H1 (cell line): ENCODE measurements at regions of chr17 and their contacts with region 1.

Region 1: DNA sequence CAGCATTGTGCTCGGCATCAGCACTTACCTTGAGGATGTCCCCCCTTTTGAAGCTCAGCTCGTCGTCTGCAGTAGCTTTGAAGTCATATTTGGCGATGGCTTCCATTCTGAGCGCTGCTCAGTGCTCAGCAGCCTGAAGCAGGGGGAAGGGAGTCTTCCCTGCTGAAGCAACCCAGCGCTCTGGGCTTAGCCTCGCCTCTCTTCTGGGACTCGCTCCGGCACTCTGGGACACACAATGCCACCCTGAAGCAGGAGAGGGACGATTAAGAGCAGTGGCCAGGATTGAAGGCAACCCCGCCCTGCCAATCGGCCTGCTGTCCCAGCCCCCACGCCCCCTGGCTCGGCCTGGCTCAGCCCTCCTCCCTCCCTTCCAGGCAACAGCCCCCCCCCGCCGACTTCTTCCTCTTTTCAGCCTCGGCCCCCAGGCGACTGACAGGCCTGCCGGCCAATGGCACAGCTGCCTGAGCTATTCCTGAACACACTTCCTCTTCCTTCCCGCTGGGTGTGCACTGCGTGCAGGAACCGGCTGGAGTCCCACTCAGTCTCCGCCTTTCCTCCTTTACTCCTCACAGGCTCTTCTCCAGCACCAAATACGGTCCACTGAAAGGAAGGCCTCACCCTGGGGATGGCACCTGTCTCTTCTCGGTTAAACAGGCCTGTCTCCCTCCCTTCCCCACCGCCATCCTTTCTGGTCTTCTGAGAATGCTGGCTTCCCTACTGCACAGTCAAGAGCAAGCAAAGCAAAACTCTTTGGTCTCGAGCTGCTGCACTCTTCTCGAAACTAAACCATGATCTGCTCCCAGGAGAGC is 11.8 kb downstream of the GRB2 start:
- DNase-seq: peak; percentile 95 to 98
- H3K4me3 ChIP-seq: peak overlapping the region; percentile 74 to 93 (median 82)
- H3K27ac ChIP-seq: peak overlapping the region; percentile 72
- H3K4me1 ChIP-seq: peaks cover 0 to 4% (median 0%) of the 10 kb centered on the region in 4 experiments; a peak in 1 of 7 replicates
- H3K27me3 ChIP-seq: no peaks in the 10 kb centered on the region
- CTCF ChIP-seq: no peak
- EP300 ChIP-seq: 0 out of 3 replicates have a peak, but pooled peaks of 1 of the 2 experiments have one; percentile 17
- POLR2A ChIP-seq: peak; percentile 61 to 87
- RAD21 ChIP-seq: peak in 1 of 2 experiments; percentile 6; a peak in 1 of 4 replicates

Region 2: DNA sequence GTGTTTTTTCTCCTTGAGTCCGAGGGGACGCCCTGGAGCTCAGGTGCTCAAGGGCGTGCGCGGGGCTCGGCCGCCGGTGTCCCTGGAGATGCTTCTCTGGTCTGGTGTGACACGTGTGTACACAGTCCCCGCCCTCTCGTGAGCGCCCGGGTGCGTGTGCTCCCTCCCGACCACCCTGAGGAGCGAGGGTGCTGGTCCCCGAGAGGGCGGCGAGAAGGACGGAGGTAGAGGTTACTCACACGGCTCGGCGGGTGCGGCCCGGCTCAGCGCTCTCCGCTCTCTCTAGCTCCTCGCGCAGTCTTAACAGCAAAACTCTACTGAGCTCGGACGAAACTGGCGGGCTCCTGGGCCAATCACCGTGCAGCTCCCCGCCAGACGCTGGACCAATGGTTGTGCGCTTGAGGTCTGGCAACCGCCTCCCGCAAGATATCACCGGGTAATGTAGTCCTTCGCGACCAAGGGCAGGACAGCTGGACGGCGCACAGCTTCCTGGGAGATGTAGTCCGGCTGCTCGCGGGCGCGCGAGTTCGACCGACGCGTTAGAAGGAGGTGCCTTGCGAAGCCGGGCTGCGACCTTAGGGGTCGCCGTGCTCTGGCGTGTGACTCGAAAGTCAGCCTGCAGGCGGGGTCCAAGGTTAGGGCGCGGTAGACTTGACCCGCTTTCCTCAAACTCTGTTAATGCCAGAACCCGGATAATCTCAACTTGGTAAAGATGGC is 104.5 kb before region 1 on chr17 and contains the start of gene SLC25A19:
- CTCF ChIA-PET with region 1: interaction called, 6 read pairs
- POLR2A ChIA-PET with region 1: interaction called, 12 read pairs
- DNase-seq: peak; percentile 94 to 98
- H3K4me3 ChIP-seq: peak within 1 kb of the TSS; percentile 77 to 94 (median 82)
- H3K27ac ChIP-seq: no peak within 1 kb of the TSS
- H3K4me1 ChIP-seq: no peaks in the 10 kb centered on the region; a peak in 3 of 7 replicates
- H3K27me3 ChIP-seq: no peaks in the 10 kb centered on the region; a peak in 2 of 7 replicates
- CTCF ChIP-seq: peak; percentile 57 to 83 (median 69)
- EP300 ChIP-seq: no peak
- POLR2A ChIP-seq: peak in 1 of 2 experiments; percentile 83; a peak in 2 of 3 replicates
- RAD21 ChIP-seq: peak; percentile 63 to 72
- total RNA-seq, gene SLC25A19: 28.6 and 33.3 TPM in 2 replicates

Region 3: DNA sequence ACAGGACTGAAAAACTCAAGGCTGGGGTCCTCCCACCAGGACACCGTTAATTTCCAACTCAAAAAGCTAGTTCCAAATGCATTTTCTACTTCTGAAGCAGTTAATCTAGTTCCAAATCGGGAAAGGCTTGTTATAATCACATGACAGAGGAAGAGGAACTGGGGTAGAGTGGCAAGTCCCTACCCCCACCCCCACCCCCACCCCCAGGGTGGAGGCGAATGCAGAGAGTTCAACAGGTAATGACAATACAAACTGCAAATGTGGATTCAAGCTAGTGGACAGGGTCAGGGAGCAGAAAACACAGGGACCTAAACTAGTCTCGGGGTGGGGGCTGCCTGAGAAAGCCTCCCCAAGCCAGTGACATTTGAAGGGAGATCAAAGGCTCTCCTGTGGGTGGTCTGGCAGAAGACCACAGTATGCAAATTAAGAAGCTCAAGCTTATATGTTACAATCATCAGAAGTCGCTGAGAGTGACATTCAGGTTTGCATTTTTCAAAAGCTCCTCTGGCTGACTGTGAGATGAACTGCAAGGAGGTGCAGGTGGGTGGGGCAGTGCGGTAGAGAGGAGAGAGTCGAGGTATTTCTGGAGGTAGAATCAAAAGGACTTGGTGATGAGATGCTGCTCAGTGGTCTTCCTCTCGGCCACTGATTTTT is 48.1 kb before region 1 on chr17:
- CTCF ChIA-PET with region 1: interaction called, 9 read pairs
- POLR2A ChIA-PET with region 1: interaction called, 14 read pairs
- DNase-seq: no peak
- H3K4me3 ChIP-seq: peak overlapping the region; percentile 21 to 53 (median 30); a peak in 6 of 8 replicates
- H3K27ac ChIP-seq: 0 out of 2 replicates have a peak overlapping the region, but pooled peaks have one; percentile 41
- H3K4me1 ChIP-seq: peaks cover 18 to 36% (median 31%) of the 10 kb centered on the region in 4 experiments
- H3K27me3 ChIP-seq: no peaks in the 10 kb centered on the region
- CTCF ChIP-seq: no peak
- EP300 ChIP-seq: no peak
- POLR2A ChIP-seq: no peak
- RAD21 ChIP-seq: no peak

Region 4: GRCh38 chr17:75380315-75380714 is 13.4 kb before region 1 on chr17:
- CTCF ChIA-PET with region 1: interaction called, 7 read pairs
- POLR2A ChIA-PET with region 1: interaction called, 12 read pairs
- DNase-seq: no peak
- H3K4me3 ChIP-seq: no peak overlapping the region
- H3K27ac ChIP-seq: no peak overlapping the region
- H3K4me1 ChIP-seq: peaks cover 0 to 5% (median 1%) of the 10 kb centered on the region in 4 experiments; a peak in 4 of 7 replicates
- H3K27me3 ChIP-seq: no peaks in the 10 kb centered on the region
- CTCF ChIP-seq: no peak
- EP300 ChIP-seq: no peak
- POLR2A ChIP-seq: no peak
- RAD21 ChIP-seq: no peak